ENCODE measurements at regions of chr11 and their contacts with region 1.

Region 1: DNA sequence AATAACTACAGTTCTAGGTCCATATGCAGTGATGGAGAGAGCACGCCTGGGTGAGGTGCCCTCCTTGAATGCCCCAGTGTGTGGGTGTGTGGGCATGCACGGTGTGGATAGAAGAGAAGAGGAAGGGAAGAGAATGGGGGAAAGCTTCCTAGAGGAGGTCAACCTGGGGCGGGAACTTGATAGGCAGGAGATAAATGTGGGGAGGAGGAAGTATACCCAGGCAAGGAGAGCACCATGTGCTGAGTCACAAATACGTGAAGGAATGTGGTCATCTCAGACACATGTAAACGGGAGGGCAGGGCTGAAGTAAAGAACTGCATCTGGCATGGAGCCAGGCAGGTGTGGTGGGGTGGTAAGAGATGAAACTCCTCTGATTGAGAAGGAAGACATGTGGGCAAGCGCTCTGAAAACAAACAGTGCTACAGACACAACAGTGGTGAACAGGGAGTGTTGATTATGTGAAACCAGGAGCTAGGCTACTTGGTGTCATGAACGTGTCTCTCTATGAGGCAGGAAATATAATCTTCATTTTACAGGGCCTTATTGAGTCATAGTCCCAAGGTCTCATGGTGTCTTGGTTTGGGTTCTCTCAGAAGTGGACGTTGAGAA is 61.5 kb upstream of the EED start:
- DNase-seq: no peak
- H3K4me3 ChIP-seq: no peak overlapping the region
- H3K27ac ChIP-seq: no peak overlapping the region
- H3K4me1 ChIP-seq: peaks cover 0 to 28% (median 5%) of the 10 kb centered on the region in 4 donors
- H3K27me3 ChIP-seq: no peaks in the 10 kb centered on the region
- CTCF ChIP-seq: no peak

Region 2: GRCh38 chr11:86052693-86053641 is 130.1 kb before region 1 on chr11:
- intact Hi-C with region 1: loop called (anchors 5 kb)
- DNase-seq: no peak
- H3K4me3 ChIP-seq: no peak overlapping the region
- H3K27ac ChIP-seq: peak overlapping the region in 1 of 2 donors; percentile 13
- H3K4me1 ChIP-seq: peaks cover 0 to 99% (median 48%) of the 10 kb centered on the region in 4 donors
- H3K27me3 ChIP-seq: no peaks in the 10 kb centered on the region
- CTCF ChIP-seq: no peak

Region 3: DNA sequence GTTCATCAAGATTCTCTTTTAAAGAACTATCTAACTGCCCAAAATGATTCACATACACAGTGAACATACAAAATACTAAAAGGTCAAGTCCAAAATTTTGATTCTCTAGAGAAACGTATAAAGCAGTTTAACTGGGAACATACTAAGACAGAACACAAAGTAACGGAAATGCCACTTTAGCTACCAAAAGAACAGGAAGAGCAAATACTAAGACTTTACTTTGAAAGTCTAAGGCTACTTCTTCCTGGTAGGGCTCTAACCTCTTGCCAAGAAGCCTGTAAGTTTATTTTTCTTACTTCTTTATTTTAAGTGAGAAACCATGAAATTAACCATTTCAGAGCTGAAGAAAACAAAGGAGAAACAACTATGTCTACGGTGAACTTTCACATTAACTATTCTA is 120.4 kb before region 1 on chr11:
- intact Hi-C with region 1: loop called (anchors 5 kb)
- DNase-seq: no peak
- H3K4me3 ChIP-seq: peak overlapping the region; percentile 16 to 78
- H3K27ac ChIP-seq: peak overlapping the region; percentile 60 to 94
- H3K4me1 ChIP-seq: peaks cover 0 to 84% (median 36%) of the 10 kb centered on the region in 4 donors
- H3K27me3 ChIP-seq: no peaks in the 10 kb centered on the region
- CTCF ChIP-seq: no peak

Region 4: GRCh38 chr11:86091566-86091965 is 91.5 kb before region 1 on chr11:
- intact Hi-C with region 1: no loop called
- DNase-seq: peak; percentile 26 to 78
- H3K4me3 ChIP-seq: no peak overlapping the region
- H3K27ac ChIP-seq: peak overlapping the region in 1 of 2 donors; percentile 48
- H3K4me1 ChIP-seq: peaks cover 0 to 38% (median 16%) of the 10 kb centered on the region in 4 donors
- H3K27me3 ChIP-seq: no peaks in the 10 kb centered on the region
- CTCF ChIP-seq: no peak